Natural killer cell (primary cell): ENCODE measurements at regions of chr1 and their contacts with region 1.

Region 1: DNA sequence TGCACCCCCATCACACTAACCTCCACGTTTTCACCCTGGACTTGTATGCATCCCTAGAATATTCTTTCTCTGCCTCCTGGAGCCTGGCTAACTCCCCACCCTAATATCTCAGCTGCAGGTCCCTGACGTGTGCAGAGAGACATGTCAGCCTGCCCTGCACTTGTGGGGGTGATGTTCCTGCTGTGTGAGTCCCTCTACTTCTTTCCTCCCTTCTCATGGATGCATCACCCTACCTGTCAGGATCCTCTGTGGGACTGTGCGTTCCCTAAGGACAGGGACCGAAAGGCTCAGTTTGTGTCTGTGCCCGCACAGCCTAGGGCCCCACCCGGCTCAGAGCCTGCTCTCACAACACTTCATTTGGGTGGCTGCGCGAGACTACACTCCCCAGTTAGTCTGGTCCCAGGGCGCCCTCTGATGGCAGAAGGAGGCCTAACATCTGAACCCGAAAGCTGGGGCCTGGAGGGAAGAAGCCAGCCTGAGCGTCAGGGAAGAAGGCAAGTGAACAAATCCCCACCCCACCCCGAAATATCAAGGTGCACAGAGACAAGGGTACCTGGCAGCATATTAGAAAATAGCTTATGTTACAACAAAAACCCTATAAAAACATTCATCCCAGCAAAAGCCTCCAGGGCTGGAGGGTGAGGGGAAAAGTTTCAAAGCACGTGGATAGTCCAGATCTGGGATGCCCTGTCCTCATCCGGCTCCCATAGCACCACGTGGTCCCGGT is 3.7 kb downstream of the CD52 start:
- DNase-seq: peak; percentile 95
- ATAC-seq: peak; percentile 89 to 94 (median 91)
- H3K4me3 ChIP-seq: no peak overlapping the region
- H3K4me3 Mint-ChIP-seq: peak overlapping the region; percentile 92
- H3K27ac ChIP-seq: peak overlapping the region; percentile 25
- H3K27ac Mint-ChIP-seq: peak overlapping the region; percentile 79 to 88
- H3K4me1 ChIP-seq: peaks cover 55% of the 10 kb centered on the region
- H3K4me1 Mint-ChIP-seq: peaks cover 49 to 53% of the 10 kb centered on the region in 2 donors
- H3K27me3 ChIP-seq: no peaks in the 10 kb centered on the region
- H3K27me3 Mint-ChIP-seq: no peaks in the 10 kb centered on the region
- CTCF ChIP-seq: peak; percentile 86

Region 2: GRCh38 chr1:26102526-26102925 is 219.0 kb before region 1 on chr1:
- intact Hi-C with region 1: loop called (anchors 1 kb)
- DNase-seq: no peak
- ATAC-seq: no peak
- H3K4me3 ChIP-seq: no peak overlapping the region
- H3K4me3 Mint-ChIP-seq: no peak overlapping the region
- H3K27ac ChIP-seq: no peak overlapping the region
- H3K27ac Mint-ChIP-seq: no peak overlapping the region
- H3K4me1 ChIP-seq: no peaks in the 10 kb centered on the region
- H3K4me1 Mint-ChIP-seq: no peaks in the 10 kb centered on the region
- H3K27me3 ChIP-seq: no peaks in the 10 kb centered on the region
- H3K27me3 Mint-ChIP-seq: peaks cover 3 to 6% of the 10 kb centered on the region in 2 donors
- CTCF ChIP-seq: no peak

Region 3: GRCh38 chr1:26169669-26170471 is 151.6 kb before region 1 on chr1 and contains the start of gene ZNF593:
- intact Hi-C with region 1: loop called (anchors 1 kb)
- DNase-seq: peak; percentile 90 to 92
- ATAC-seq: peak; percentile 94 to 96 (median 96)
- H3K4me3 ChIP-seq: peak within 1 kb of the TSS; percentile 60
- H3K4me3 Mint-ChIP-seq: peak within 1 kb of the TSS; percentile 84
- H3K27ac ChIP-seq: peak within 1 kb of the TSS; percentile 10
- H3K27ac Mint-ChIP-seq: peak within 1 kb of the TSS; percentile 66 to 92
- H3K4me1 ChIP-seq: peaks cover 18% of the 10 kb centered on the region
- H3K4me1 Mint-ChIP-seq: peaks cover 0 to 21% of the 10 kb centered on the region in 2 donors
- H3K27me3 ChIP-seq: no peaks in the 10 kb centered on the region
- H3K27me3 Mint-ChIP-seq: peaks cover 0 to 12% of the 10 kb centered on the region in 2 donors
- CTCF ChIP-seq: peak; percentile 83
- total RNA-seq, gene ZNF593: 8.6 to 17.8 (median 15.6) TPM

Region 4: GRCh38 chr1:26279456-26280332 is 41.8 kb before region 1 on chr1 and contains the start of gene SH3BGRL3:
- intact Hi-C with region 1: loop called (anchors 1 kb)
- DNase-seq: peak; percentile 73 to 92
- ATAC-seq: peak; percentile 54 to 80 (median 69)
- H3K4me3 ChIP-seq: peak within 1 kb of the TSS; percentile 88
- H3K4me3 Mint-ChIP-seq: peak within 1 kb of the TSS; percentile 93
- H3K27ac ChIP-seq: peak within 1 kb of the TSS; percentile 85
- H3K27ac Mint-ChIP-seq: peak within 1 kb of the TSS; percentile 82 to 86
- H3K4me1 ChIP-seq: peaks cover 92% of the 10 kb centered on the region
- H3K4me1 Mint-ChIP-seq: peaks cover 75 to 85% of the 10 kb centered on the region in 2 donors
- H3K27me3 ChIP-seq: no peaks in the 10 kb centered on the region
- H3K27me3 Mint-ChIP-seq: no peaks in the 10 kb centered on the region
- CTCF ChIP-seq: no peak
- total RNA-seq, gene SH3BGRL3: 396 to 488 (median 437) TPM

Region 5: GRCh38 chr1:26284597-26285360 is 36.7 kb before region 1 on chr1:
- intact Hi-C with region 1: loop called (anchors 2 kb)
- DNase-seq: peak; percentile 80 to 97
- ATAC-seq: peak; percentile 74 to 87 (median 79)
- H3K4me3 ChIP-seq: no peak overlapping the region
- H3K4me3 Mint-ChIP-seq: peak overlapping the region; percentile 81
- H3K27ac ChIP-seq: peak overlapping the region; percentile 92
- H3K27ac Mint-ChIP-seq: peak overlapping the region; percentile 86 to 96
- H3K4me1 ChIP-seq: peaks cover 97% of the 10 kb centered on the region
- H3K4me1 Mint-ChIP-seq: peaks cover 73 to 90% of the 10 kb centered on the region in 2 donors
- H3K27me3 ChIP-seq: no peaks in the 10 kb centered on the region
- H3K27me3 Mint-ChIP-seq: no peaks in the 10 kb centered on the region
- CTCF ChIP-seq: peak; percentile 61

Region 6: GRCh38 chr1:26378088-26378878 is 56.8 kb after region 1 on chr1:
- intact Hi-C with region 1: loop called (anchors 10 kb)
- DNase-seq: peak; percentile 85 to 93
- ATAC-seq: peak; percentile 89 to 97 (median 93)
- H3K4me3 ChIP-seq: peak overlapping the region; percentile 0
- H3K4me3 Mint-ChIP-seq: peak overlapping the region; percentile 92
- H3K27ac ChIP-seq: peak overlapping the region; percentile 69
- H3K27ac Mint-ChIP-seq: peak overlapping the region; percentile 82 to 93
- H3K4me1 ChIP-seq: peaks cover 64% of the 10 kb centered on the region
- H3K4me1 Mint-ChIP-seq: peaks cover 62 to 68% of the 10 kb centered on the region in 2 donors
- H3K27me3 ChIP-seq: no peaks in the 10 kb centered on the region
- H3K27me3 Mint-ChIP-seq: peaks cover 6% of the 10 kb centered on the region in 2 donors
- CTCF ChIP-seq: no peak

Region 7: GRCh38 chr1:26391450-26391849 is 70.0 kb after region 1 on chr1:
- intact Hi-C with region 1: loop called (anchors 5 kb)
- DNase-seq: peak; percentile 35 to 81
- ATAC-seq: peak; percentile 81 to 84 (median 83)
- H3K4me3 ChIP-seq: no peak overlapping the region
- H3K4me3 Mint-ChIP-seq: peak overlapping the region; percentile 14
- H3K27ac ChIP-seq: no peak overlapping the region
- H3K27ac Mint-ChIP-seq: no peak overlapping the region
- H3K4me1 ChIP-seq: peaks cover 32% of the 10 kb centered on the region
- H3K4me1 Mint-ChIP-seq: peaks cover 23 to 30% of the 10 kb centered on the region in 2 donors
- H3K27me3 ChIP-seq: peaks cover 6% of the 10 kb centered on the region
- H3K27me3 Mint-ChIP-seq: peaks cover 28 to 34% of the 10 kb centered on the region in 2 donors
- CTCF ChIP-seq: peak; percentile 77

Region 8: GRCh38 chr1:26695356-26696118 is 374.1 kb after region 1 on chr1 and contains the start of gene ARID1A:
- intact Hi-C with region 1: no loop called
- DNase-seq: peak; percentile 97 to 98
- ATAC-seq: peak; percentile 63 to 83 (median 68)
- H3K4me3 ChIP-seq: peak within 1 kb of the TSS; percentile 71
- H3K4me3 Mint-ChIP-seq: peak within 1 kb of the TSS; percentile 98
- H3K27ac ChIP-seq: peak within 1 kb of the TSS; percentile 84
- H3K27ac Mint-ChIP-seq: peak within 1 kb of the TSS; percentile 91 to 98
- H3K4me1 ChIP-seq: peaks cover 32% of the 10 kb centered on the region
- H3K4me1 Mint-ChIP-seq: peaks cover 37 to 40% of the 10 kb centered on the region in 2 donors
- H3K27me3 ChIP-seq: no peaks in the 10 kb centered on the region
- H3K27me3 Mint-ChIP-seq: no peaks in the 10 kb centered on the region
- CTCF ChIP-seq: no peak
- total RNA-seq, gene ARID1A: 199 to 214 (median 202) TPM